Activated B cell treated with CpG ODN at 0.5 μM for 24 hours (primary cell): ENCODE measurements at regions of chr15 and their contacts with region 1.

Region 1: GRCh38 chr15:45634442-45635190 is at the start of gene SQOR:
- DNase-seq: no peak
- ATAC-seq: peak; percentile 78
- H3K4me3 Mint-ChIP-seq: peak within 1 kb of the TSS; percentile 96
- H3K27ac Mint-ChIP-seq: peak within 1 kb of the TSS; percentile 94
- H3K4me1 Mint-ChIP-seq: peaks cover 33% of the 10 kb centered on the region
- H3K27me3 Mint-ChIP-seq: no peaks in the 10 kb centered on the region
- CTCF ChIP-seq: no peak
- total RNA-seq, gene SQOR: 39.2 and 44.9 TPM in 2 replicates

Region 2: GRCh38 chr15:45674677-45675076 is 40.1 kb after region 1 on chr15:
- CTCF ChIA-PET with region 1: no interaction called
- POLR2A ChIA-PET with region 1: interaction called, 11 read pairs
- intact Hi-C with region 1: no loop called
- DNase-seq: no peak
- ATAC-seq: no peak
- H3K4me3 Mint-ChIP-seq: no peak overlapping the region
- H3K27ac Mint-ChIP-seq: no peak overlapping the region
- H3K4me1 Mint-ChIP-seq: no peaks in the 10 kb centered on the region
- H3K27me3 Mint-ChIP-seq: no peaks in the 10 kb centered on the region
- CTCF ChIP-seq: no peak

Region 3: GRCh38 chr15:46354443-46354842 is 719.8 kb after region 1 on chr15:
- CTCF ChIA-PET with region 1: no interaction called
- POLR2A ChIA-PET with region 1: no interaction called
- intact Hi-C with region 1: no loop called
- DNase-seq: no peak
- ATAC-seq: no peak
- H3K4me3 Mint-ChIP-seq: no peak overlapping the region
- H3K27ac Mint-ChIP-seq: no peak overlapping the region
- H3K4me1 Mint-ChIP-seq: no peaks in the 10 kb centered on the region
- H3K27me3 Mint-ChIP-seq: no peaks in the 10 kb centered on the region
- CTCF ChIP-seq: no peak